OCI-LY7 (cell line): ENCODE measurements at regions of chr3 and their contacts with region 1.

Region 1: GRCh38 chr3:187946163-187946691 is 201.0 kb upstream of the BCL6 start:
- DNase-seq: peak; percentile 90
- H3K4me3 ChIP-seq: peak overlapping the region; percentile 69
- H3K27ac ChIP-seq: peak overlapping the region; percentile 99
- H3K4me1 ChIP-seq: peaks cover 100% of the 10 kb centered on the region
- CTCF ChIP-seq: peak; percentile 41; the same call in 1 of the 2 replicates

Region 2: DNA sequence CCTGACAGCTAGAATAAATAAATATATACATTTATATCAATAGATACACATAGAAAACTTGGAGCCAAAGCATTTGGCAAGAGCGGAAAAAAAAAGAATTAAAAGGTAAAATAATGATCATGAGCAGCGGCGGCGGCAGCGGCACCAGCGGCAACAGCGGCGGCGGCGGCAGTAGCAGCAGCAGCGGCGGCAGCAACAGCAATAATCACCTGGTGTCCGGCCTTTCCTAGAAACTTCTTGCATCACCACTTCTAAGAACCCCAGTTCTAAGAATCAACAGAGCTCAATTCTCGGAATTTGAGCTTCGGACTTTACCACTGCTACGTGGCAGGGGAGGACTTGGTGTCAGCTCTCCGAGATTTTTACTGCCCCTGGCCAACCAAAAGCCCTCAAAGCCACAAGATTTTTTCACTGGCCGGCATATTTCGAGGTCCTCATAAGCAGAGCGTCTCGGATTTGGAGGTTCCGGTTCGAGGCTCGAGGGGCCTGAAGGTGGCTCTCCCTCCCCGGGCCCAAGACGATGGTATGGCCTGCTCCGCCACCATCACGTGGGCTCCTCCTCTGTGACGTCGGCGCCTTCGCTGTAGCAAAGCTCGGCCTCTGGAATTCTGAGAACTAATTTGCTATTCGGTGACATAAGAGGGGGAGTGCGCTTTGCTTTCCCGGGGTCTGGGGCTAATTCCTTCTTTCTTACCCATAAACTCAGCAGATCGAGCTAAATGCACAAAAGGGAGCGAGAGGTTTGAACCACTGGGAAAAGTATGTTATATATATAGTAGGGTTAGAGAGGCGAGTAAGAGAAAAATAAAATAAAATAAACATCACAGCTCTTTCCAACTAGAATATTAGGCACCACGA is 200.8 kb before region 1 on chr3 and contains the start of gene BCL6:
- CTCF ChIA-PET with region 1: interaction called, 18 read pairs
- POLR2A ChIA-PET with region 1: interaction called, 420 read pairs
- intact Hi-C with region 1: loop called (anchors 1 kb)
- DNase-seq: peak; percentile 98
- H3K4me3 ChIP-seq: peak within 1 kb of the TSS; percentile 86
- H3K27ac ChIP-seq: peak within 1 kb of the TSS; percentile 90
- H3K4me1 ChIP-seq: peaks cover 39% of the 10 kb centered on the region
- CTCF ChIP-seq: no peak
- total RNA-seq, gene BCL6: 62.4 and 65.6 TPM in 2 replicates

Region 3: GRCh38 chr3:187913617-187914291 is 32.5 kb before region 1 on chr3:
- CTCF ChIA-PET with region 1: interaction called, 9 read pairs
- POLR2A ChIA-PET with region 1: interaction called, 184 read pairs
- intact Hi-C with region 1: no loop called
- DNase-seq: peak; percentile 73
- H3K4me3 ChIP-seq: peak overlapping the region; percentile 9
- H3K27ac ChIP-seq: peak overlapping the region; percentile 97
- H3K4me1 ChIP-seq: peaks cover 90% of the 10 kb centered on the region
- CTCF ChIP-seq: no peak

Region 4: GRCh38 chr3:187963677-187964385 is 17.6 kb after region 1 on chr3:
- CTCF ChIA-PET with region 1: interaction called, 9 read pairs
- POLR2A ChIA-PET with region 1: interaction called, 1,356 read pairs
- intact Hi-C with region 1: loop called (anchors 1 kb)
- DNase-seq: peak; percentile 48
- H3K4me3 ChIP-seq: peak overlapping the region; percentile 1
- H3K27ac ChIP-seq: peak overlapping the region; percentile 99
- H3K4me1 ChIP-seq: peaks cover 100% of the 10 kb centered on the region
- CTCF ChIP-seq: no peak

Region 5: DNA sequence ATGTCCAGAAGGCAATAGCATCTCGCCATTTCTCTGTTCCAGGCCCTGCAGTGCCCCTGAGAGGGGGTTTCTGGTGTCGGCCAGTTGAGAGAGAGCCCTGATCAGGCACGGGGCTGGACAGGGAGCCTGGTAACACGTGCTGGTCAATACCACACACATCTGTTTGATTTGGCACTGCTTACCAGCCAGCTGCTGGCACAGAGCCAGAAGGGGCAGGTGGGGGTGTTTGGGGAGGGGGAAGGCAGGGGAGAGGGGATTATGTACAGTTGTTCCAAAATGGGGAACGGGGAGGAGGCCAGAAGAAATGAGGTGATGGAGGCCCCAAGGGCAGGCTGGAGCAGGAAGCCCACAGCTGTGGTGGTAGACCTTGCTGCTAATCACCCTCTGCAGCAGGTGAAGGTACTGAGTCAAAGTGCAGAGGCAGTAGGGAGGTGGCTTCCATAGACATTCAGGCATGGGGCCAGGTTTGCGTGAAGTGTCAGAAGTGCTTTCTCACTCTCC is 54.2 kb after region 1 on chr3:
- CTCF ChIA-PET with region 1: no interaction called
- POLR2A ChIA-PET with region 1: interaction called, 28 read pairs
- intact Hi-C with region 1: loop called (anchors 2 kb)
- DNase-seq: peak; percentile 82
- H3K4me3 ChIP-seq: peak overlapping the region; percentile 60
- H3K27ac ChIP-seq: peak overlapping the region; percentile 96
- H3K4me1 ChIP-seq: peaks cover 83% of the 10 kb centered on the region
- CTCF ChIP-seq: no peak

Region 6: DNA sequence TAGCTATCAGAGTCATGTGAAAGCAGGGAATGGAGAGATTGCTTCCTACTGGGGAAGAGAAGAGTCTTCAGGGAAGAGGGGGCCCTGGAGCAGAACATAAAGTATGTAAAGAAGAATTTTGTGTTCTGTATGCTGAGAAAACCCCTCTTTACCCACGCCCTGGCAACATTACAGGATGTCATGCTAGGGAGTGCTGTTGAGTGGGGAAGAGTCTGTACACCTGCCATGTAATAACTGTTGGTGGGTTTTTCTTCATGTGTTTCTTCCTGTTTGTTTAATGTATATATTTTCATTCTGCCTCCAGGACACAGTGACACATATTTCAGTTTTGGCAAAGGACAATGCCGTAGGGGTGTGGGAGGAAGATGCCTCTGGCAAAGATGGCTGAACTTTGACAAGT is 84.9 kb after region 1 on chr3:
- CTCF ChIA-PET with region 1: no interaction called
- POLR2A ChIA-PET with region 1: no interaction called
- intact Hi-C with region 1: no loop called
- DNase-seq: peak; percentile 58
- H3K4me3 ChIP-seq: no peak overlapping the region
- H3K27ac ChIP-seq: peak overlapping the region; percentile 36
- H3K4me1 ChIP-seq: peaks cover 33% of the 10 kb centered on the region
- CTCF ChIP-seq: peak; percentile 39; the same call in 1 of the 2 replicates

Region 7: GRCh38 chr3:188244395-188244861 is 298.2 kb after region 1 on chr3:
- CTCF ChIA-PET with region 1: no interaction called
- POLR2A ChIA-PET with region 1: interaction called, 74 read pairs
- intact Hi-C with region 1: loop called (anchors 1 kb)
- DNase-seq: peak; percentile 76
- H3K4me3 ChIP-seq: peak overlapping the region; percentile 21
- H3K27ac ChIP-seq: peak overlapping the region; percentile 98
- H3K4me1 ChIP-seq: peaks cover 96% of the 10 kb centered on the region
- CTCF ChIP-seq: no peak